ENCODE measurements at regions of chr18 and their contacts with region 1.

Region 1: GRCh38 chr18:3857544-3857943 is 407.6 kb downstream of the TGIF1 start:
- DNase-seq: no peak
- ATAC-seq: no peak
- H3K4me3 Mint-ChIP-seq: no peak overlapping the region
- H3K27ac Mint-ChIP-seq: no peak overlapping the region
- H3K4me1 Mint-ChIP-seq: no peaks in the 10 kb centered on the region
- H3K27me3 Mint-ChIP-seq: peaks cover 4% of the 10 kb centered on the region

Region 2: DNA sequence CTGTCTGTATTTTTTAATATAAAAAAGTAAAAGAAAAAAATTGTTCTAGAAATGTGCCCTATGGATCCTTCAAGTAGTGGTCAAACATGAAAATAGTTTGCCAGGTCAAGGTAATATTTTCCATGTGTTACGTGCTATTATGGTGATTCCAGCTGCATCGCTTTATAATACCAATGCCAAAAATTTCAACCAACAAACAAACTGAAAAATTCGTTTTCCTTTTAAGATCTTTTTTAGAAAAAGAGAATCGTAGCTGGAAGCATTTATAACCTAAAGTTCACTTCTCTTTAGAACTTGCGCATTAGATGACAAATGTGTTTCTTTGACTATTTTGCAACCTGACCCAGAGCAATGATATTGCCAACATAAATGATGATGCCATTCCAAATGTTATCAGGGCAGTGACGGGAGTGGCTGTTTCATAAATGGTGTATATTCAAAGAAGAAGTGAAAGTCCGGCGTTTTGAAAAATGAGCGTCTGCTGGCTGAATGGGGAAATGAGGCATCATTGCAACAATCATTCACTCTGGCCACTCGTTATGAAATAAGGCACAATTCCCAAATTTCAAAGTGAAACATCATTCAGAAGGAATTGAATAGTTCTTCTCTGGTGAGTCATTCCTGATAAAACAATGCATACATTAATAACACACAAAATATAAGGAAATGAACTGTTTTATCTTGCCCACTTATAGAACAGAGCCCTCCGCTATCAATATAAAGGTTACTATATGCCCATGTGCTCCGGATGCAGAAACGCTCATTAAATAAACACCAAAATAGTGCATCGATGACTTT is 110.2 kb before region 1 on chr18:
- CTCF ChIA-PET with region 1: no interaction called
- POLR2A ChIA-PET with region 1: no interaction called
- intact Hi-C with region 1: no loop called
- DNase-seq: no peak
- ATAC-seq: no peak
- H3K4me3 Mint-ChIP-seq: no peak overlapping the region
- H3K27ac Mint-ChIP-seq: no peak overlapping the region
- H3K4me1 Mint-ChIP-seq: no peaks in the 10 kb centered on the region
- H3K27me3 Mint-ChIP-seq: peaks cover 7% of the 10 kb centered on the region

Region 3: DNA sequence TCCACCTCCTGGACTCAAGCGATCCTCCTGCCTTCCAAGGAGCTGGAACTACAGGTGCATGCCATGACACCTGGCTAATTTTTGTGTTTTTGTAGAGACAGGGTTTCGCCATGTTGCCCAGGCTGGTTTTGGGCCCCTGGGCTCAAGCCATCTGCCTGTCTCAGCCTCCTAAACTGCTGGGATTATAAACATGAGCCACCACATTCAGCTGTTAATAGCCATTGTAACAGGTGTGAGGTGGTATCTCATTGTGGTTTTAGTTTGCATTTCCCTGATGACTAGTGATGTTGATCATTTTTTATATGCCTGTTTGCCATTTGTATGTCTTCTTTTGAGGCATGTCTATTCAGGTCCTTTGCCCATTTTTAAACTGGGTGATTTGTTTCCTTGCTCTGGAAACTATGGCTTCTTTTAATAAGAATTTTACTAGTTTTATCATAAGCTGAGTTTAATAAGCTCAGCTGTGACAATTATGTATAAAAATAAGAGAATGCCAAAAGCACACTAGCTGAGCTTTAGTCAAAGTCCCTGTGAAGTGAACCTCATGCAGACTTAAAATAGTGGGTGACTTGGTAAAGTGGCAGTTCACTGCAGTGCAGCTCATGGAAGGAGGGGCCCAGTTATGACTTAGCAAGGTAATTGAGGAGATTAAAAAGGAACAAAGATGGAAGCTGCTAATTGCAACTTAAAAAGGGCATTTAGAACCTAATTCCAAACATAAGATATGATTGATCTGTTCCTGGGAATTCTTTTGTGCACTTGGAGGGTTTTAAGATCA is 57.5 kb after region 1 on chr18:
- CTCF ChIA-PET with region 1: no interaction called
- POLR2A ChIA-PET with region 1: no interaction called
- intact Hi-C with region 1: loop called in 1 of 2 experiments (anchors 10 kb)
- DNase-seq: no peak
- ATAC-seq: no peak
- H3K4me3 Mint-ChIP-seq: no peak overlapping the region
- H3K27ac Mint-ChIP-seq: no peak overlapping the region
- H3K4me1 Mint-ChIP-seq: no peaks in the 10 kb centered on the region
- H3K27me3 Mint-ChIP-seq: peaks cover 5% of the 10 kb centered on the region

Measured in activated CD4-positive, alpha-beta T cell treated with anti-CD3 and anti-CD28 coated beads for 36 hours (primary cell).